ENCODE measurements at regions of chr14 and their contacts with region 1.

Region 1: GRCh38 chr14:21014761-21015190 is 10.1 kb downstream of the NDRG2 start:
- DNase-seq: peak; percentile 86
- ATAC-seq: peak; percentile 83
- H3K4me3 ChIP-seq: no peak overlapping the region
- H3K4me3 Mint-ChIP-seq: no peak overlapping the region
- H3K27ac ChIP-seq: no peak overlapping the region
- H3K27ac Mint-ChIP-seq: no peak overlapping the region
- H3K4me1 ChIP-seq: no peaks in the 10 kb centered on the region
- H3K4me1 Mint-ChIP-seq: no peaks in the 10 kb centered on the region
- H3K27me3 ChIP-seq: peaks cover 0 to 11% (median 2%) of the 10 kb centered on the region in 4 experiments
- H3K27me3 Mint-ChIP-seq: peaks cover 35% of the 10 kb centered on the region
- CTCF ChIP-seq: peak; percentile 92

Region 2: GRCh38 chr14:20306079-20306423 is 708.7 kb before region 1 on chr14:
- CTCF ChIA-PET with region 1: no interaction called
- POLR2A ChIA-PET with region 1: no interaction called
- intact Hi-C with region 1: no loop called
- DNase-seq: no peak
- ATAC-seq: no peak
- H3K4me3 ChIP-seq: peak overlapping the region in 1 of 5 experiments; percentile 95
- H3K4me3 Mint-ChIP-seq: peak overlapping the region; percentile 89
- H3K27ac ChIP-seq: no peak overlapping the region
- H3K27ac Mint-ChIP-seq: peak overlapping the region; percentile 85
- H3K4me1 ChIP-seq: peaks cover 6 to 14% of the 10 kb centered on the region in 2 donors
- H3K4me1 Mint-ChIP-seq: peaks cover 24% of the 10 kb centered on the region
- H3K27me3 ChIP-seq: no peaks in the 10 kb centered on the region
- H3K27me3 Mint-ChIP-seq: no peaks in the 10 kb centered on the region
- CTCF ChIP-seq: peak; percentile 40

Region 3: DNA sequence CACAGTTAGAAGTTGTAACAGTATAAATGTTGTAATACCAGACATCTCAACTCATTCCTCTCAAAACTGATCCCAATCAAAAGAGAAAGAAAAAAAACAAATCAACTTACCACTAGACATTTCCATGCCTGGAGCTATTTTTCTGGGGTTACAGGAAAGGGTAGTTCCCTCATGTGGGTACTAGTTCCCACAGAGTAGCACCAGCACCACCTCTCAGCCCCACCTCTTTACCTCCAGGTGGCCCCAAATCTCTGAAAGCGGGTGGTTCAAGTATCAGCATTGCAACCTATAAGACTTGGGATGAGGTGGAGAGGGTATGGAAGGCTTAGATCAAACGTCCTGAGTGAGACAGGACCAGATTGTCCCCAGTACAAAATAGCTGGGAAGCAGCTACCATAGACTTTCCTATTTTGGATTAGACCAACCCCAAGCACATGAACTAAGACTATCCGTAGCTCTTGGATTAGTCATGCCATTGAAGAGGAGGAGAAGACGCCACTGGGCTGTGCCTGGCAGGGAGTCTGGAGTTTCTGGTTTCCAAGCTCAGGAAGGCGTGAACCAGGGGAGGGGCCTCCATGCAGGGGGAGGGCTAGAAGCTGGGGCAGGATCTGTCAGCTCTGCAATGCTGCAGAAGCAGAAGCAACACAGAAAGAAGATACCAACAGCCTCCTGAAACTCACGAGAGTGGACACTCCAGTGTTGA is 16.0 kb before region 1 on chr14 and contains the start of gene SLC39A2:
- CTCF ChIA-PET with region 1: interaction called, 47 read pairs
- POLR2A ChIA-PET with region 1: no interaction called
- intact Hi-C with region 1: no loop called
- DNase-seq: no peak
- ATAC-seq: no peak
- H3K4me3 ChIP-seq: no peak within 1 kb of the TSS
- H3K4me3 Mint-ChIP-seq: no peak within 1 kb of the TSS
- H3K27ac ChIP-seq: no peak within 1 kb of the TSS
- H3K27ac Mint-ChIP-seq: no peak within 1 kb of the TSS
- H3K4me1 ChIP-seq: no peaks in the 10 kb centered on the region
- H3K4me1 Mint-ChIP-seq: no peaks in the 10 kb centered on the region
- H3K27me3 ChIP-seq: no peaks in the 10 kb centered on the region
- H3K27me3 Mint-ChIP-seq: no peaks in the 10 kb centered on the region
- CTCF ChIP-seq: no peak
- total RNA-seq, gene SLC39A2: 0.25 and 0.51 TPM in 2 replicates

Region 4: GRCh38 chr14:21024585-21025370 is 10.0 kb after region 1 on chr14 and contains the start of gene NDRG2:
- CTCF ChIA-PET with region 1: interaction called, 23 read pairs
- POLR2A ChIA-PET with region 1: no interaction called
- intact Hi-C with region 1: no loop called
- DNase-seq: peak; percentile 83
- ATAC-seq: peak; percentile 94
- H3K4me3 ChIP-seq: peak within 1 kb of the TSS; percentile 15 to 86 (median 75)
- H3K4me3 Mint-ChIP-seq: peak within 1 kb of the TSS; percentile 93
- H3K27ac ChIP-seq: no peak within 1 kb of the TSS
- H3K27ac Mint-ChIP-seq: peak within 1 kb of the TSS; percentile 67
- H3K4me1 ChIP-seq: peaks cover 12 to 23% of the 10 kb centered on the region in 2 donors
- H3K4me1 Mint-ChIP-seq: peaks cover 19% of the 10 kb centered on the region
- H3K27me3 ChIP-seq: peaks cover 0 to 30% (median 8%) of the 10 kb centered on the region in 4 experiments
- H3K27me3 Mint-ChIP-seq: peaks cover 16% of the 10 kb centered on the region
- CTCF ChIP-seq: no peak
- total RNA-seq, gene NDRG2: 9.5 and 10.2 TPM in 2 replicates

Region 5: DNA sequence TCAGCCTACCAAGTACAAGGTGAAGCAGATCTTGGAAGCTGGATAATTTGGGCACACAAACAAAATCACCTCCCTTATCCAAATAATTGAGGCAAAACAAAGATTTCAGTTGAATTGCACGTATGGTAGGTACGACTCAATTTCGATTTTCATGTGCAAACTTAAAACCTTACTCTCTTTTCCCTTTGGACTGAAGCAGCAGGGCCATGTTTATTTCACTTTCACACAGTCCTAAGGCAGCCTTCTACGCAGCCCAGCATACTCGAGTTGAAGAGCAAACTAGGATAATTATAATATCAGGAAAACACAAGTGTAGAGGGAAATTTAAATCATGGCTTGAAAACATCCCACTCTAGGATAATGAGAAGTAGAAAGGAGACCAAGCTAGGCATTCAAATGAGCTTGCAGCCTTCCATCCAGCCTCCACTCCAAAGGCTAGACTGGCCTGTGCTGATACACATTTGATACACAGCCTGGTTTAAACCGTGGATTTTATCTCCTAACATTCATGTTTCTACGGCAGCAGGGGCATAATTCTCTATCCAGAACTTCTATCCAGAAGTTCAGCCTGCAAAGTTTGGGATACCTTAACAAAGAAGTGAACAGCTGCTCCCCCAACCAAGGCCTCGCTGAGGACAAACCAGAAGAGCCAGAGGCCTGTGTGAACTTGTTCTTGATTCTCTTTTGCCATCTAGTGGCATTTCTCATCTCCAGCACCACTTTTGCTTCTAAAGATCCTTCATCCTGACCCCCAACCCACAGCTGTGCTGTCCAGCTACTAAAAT is 25.0 kb after region 1 on chr14:
- CTCF ChIA-PET with region 1: interaction called, 305 read pairs
- POLR2A ChIA-PET with region 1: interaction called, 3 read pairs
- intact Hi-C with region 1: loop called (anchors 1 kb)
- DNase-seq: peak; percentile 63
- ATAC-seq: no peak
- H3K4me3 ChIP-seq: no peak overlapping the region
- H3K4me3 Mint-ChIP-seq: no peak overlapping the region
- H3K27ac ChIP-seq: no peak overlapping the region
- H3K27ac Mint-ChIP-seq: no peak overlapping the region
- H3K4me1 ChIP-seq: no peaks in the 10 kb centered on the region
- H3K4me1 Mint-ChIP-seq: no peaks in the 10 kb centered on the region
- H3K27me3 ChIP-seq: no peaks in the 10 kb centered on the region
- H3K27me3 Mint-ChIP-seq: peaks cover 47% of the 10 kb centered on the region
- CTCF ChIP-seq: peak; percentile 37

Region 6: DNA sequence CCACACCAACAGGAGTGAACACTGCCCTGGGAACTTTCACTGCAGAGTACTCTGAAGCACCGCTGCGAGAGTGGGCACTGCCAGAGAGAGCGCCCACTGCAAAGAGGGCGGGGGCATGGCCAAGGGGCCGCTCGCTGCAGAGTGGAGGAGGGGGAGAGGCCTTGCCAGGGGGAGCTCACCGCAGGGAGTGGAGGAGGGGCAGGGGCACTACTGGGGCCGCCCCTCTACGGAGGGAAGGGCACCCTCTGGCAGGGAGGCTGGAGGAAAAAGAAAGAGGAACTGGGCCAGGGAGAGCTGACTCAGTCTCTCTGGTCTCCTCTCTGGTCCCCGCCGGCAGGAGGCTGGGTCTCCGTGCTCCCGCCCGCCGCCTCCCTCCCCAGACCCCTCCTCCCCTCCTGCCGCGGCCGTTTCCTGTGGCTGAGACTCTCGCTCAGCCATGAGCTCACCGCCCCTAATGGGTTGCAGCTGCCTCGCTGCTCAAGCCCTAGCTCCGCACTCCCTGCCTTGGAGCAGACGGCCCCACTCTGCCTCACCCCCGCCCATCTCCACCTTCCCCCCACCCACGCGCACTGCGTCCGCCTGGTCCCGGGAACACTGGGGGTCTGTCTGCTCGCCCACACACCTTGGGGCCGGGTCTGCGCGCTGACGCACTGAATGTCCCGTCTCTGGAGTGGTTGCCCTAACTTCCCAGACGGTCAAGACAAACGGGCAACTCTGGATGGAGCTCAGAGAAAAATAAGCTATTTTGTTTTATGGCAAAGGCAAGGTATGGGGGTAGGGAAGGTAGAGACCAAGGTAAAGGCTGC is 56.7 kb after region 1 on chr14:
- CTCF ChIA-PET with region 1: interaction called, 93 read pairs
- POLR2A ChIA-PET with region 1: interaction called, 3 read pairs
- intact Hi-C with region 1: loop called (anchors 1 kb)
- DNase-seq: peak; percentile 79
- ATAC-seq: peak; percentile 73
- H3K4me3 ChIP-seq: peak overlapping the region; percentile 17 to 69 (median 53)
- H3K4me3 Mint-ChIP-seq: peak overlapping the region; percentile 93
- H3K27ac ChIP-seq: no peak overlapping the region
- H3K27ac Mint-ChIP-seq: peak overlapping the region; percentile 73
- H3K4me1 ChIP-seq: peaks cover 34 to 40% of the 10 kb centered on the region in 2 donors
- H3K4me1 Mint-ChIP-seq: peaks cover 44% of the 10 kb centered on the region
- H3K27me3 ChIP-seq: peaks cover 0 to 50% (median 18%) of the 10 kb centered on the region in 4 experiments
- H3K27me3 Mint-ChIP-seq: peaks cover 24% of the 10 kb centered on the region
- CTCF ChIP-seq: no peak

Region 7: GRCh38 chr14:21103710-21104447 is 89.1 kb after region 1 on chr14:
- CTCF ChIA-PET with region 1: interaction called, 348 read pairs
- POLR2A ChIA-PET with region 1: interaction called, 10 read pairs
- intact Hi-C with region 1: loop called (anchors 1 kb)
- DNase-seq: peak; percentile 97
- ATAC-seq: peak; percentile 86
- H3K4me3 ChIP-seq: peak overlapping the region; percentile 72 to 92 (median 84)
- H3K4me3 Mint-ChIP-seq: peak overlapping the region; percentile 78
- H3K27ac ChIP-seq: peak overlapping the region; percentile 93 to 96
- H3K27ac Mint-ChIP-seq: peak overlapping the region; percentile 96
- H3K4me1 ChIP-seq: peaks cover 17 to 25% of the 10 kb centered on the region in 2 donors
- H3K4me1 Mint-ChIP-seq: peaks cover 15% of the 10 kb centered on the region
- H3K27me3 ChIP-seq: peaks cover 0 to 25% (median 15%) of the 10 kb centered on the region in 4 experiments
- H3K27me3 Mint-ChIP-seq: peaks cover 26% of the 10 kb centered on the region
- CTCF ChIP-seq: peak; percentile 76

Region 8: GRCh38 chr14:21557084-21557901 is 542.5 kb after region 1 on chr14:
- CTCF ChIA-PET with region 1: interaction called, 3 read pairs
- POLR2A ChIA-PET with region 1: no interaction called
- intact Hi-C with region 1: loop called (anchors 5 kb)
- DNase-seq: peak; percentile 88
- ATAC-seq: peak; percentile 53
- H3K4me3 ChIP-seq: peak overlapping the region in 3 of 5 experiments; percentile 1 to 45 (median 31)
- H3K4me3 Mint-ChIP-seq: peak overlapping the region; percentile 26
- H3K27ac ChIP-seq: no peak overlapping the region
- H3K27ac Mint-ChIP-seq: no peak overlapping the region
- H3K4me1 ChIP-seq: peaks cover 5% of the 10 kb centered on the region in 2 donors
- H3K4me1 Mint-ChIP-seq: peaks cover 6% of the 10 kb centered on the region
- H3K27me3 ChIP-seq: no peaks in the 10 kb centered on the region
- H3K27me3 Mint-ChIP-seq: peaks cover 3% of the 10 kb centered on the region
- CTCF ChIP-seq: peak; percentile 81